Heart left ventricle (tissue), 16 donors: ENCODE measurements at regions of chr3 and their contacts with region 1.

Region 1: DNA sequence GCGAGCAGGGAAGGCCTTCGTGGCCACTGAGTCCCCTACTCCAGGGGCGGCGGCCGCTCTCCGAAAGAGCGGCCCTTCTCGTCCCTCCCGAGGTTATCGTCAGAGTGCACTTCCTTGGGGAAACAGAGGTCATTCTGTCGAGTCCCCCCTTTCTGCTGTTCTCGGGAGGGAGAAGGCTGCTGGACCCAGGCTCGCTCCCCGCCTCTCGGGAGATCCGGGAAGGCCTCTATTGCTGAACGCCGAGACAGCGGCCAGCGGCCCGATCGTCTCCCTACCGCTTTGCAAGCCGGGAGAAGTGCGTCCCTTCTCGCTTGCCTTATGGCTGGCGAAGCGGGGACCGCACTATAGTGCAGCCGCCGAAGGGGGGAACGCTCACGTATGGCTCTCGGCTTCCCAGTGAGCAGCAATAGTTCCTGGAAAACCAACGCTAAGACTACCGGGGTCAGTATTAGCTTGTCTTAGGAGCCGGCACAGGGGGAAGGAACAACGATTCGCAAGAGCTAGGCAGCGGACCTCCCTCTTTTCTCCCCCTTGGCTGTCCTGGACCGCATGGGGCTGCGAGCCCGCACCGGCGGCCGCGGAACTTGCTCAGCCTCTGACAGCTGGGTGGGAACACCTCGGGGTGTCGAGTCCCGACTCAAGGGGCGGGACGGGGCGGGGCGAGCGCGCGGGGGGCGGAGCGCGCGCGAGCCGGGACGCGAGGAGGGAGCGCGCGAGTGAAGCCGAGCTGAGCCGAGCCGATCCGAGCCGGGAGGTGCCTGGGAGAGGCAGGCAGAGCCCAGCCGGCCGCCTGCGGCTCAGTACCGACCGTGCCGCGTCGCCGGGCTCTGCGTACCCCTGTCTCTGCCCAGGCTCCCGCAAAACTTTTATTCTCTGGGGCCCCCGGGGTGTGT is 930 bp upstream of the PPM1L start:
- DNase-seq: peak; percentile 94 to 97 (median 95)
- ATAC-seq: peak; percentile 93 to 96 (median 94)
- H3K4me3 ChIP-seq: peak overlapping the region; percentile 66 to 93 (median 82)
- H3K27ac ChIP-seq: peak overlapping the region; percentile 87 to 99 (median 96)
- H3K4me1 ChIP-seq: peaks cover 0 to 38% (median 13%) of the 10 kb centered on the region in 12 donors
- H3K27me3 ChIP-seq: no peaks in the 10 kb centered on the region
- CTCF ChIP-seq: no peak
- POLR2A ChIP-seq: peak; percentile 49 to 92

Region 2: DNA sequence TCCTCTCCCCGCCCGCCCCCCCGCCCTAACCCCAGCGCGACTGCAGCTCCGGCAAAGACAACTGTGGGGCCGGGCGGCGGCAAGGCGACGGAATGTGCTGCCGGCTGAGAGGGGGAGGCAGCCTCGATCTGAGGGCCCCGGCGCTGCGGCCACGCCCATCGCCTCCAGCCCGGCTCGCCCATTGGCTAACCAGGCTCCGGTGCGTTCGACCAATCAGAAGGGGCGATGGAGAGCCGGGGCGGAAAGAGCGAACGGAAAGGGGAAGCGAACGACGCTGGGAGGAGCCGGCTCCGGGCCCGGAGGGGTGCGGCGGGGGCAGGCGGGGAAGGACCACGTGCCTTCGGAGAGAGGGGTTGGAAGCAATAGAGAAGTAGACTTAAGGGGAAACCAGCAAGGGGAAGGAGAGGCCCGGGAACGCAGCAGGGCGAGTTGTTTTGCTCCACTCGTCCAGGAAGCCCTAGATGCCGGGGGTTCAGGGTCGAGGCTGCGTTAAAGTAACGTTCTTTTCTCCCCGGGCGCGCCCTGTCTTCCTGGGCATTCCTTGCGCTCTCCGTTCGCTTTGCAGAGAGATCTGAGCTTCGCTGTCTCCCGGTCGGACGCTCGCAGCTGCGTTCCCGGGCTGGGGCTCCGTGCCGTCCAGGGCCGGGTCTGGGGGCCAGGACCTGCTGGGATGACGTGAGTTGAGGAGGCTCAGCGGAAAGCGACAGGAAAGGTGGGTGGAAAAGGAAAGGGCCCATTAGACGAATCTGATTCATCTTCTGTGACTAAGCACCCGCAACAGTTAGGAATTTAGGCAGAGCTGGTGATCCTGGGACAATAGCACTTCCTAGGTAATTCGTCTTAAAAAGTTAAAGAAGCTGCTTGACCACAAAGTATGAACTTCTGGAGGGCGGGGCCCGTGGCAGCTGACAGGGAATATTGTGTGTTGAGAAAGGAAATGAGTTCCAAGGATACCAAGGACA is 189.4 kb before region 1 on chr3 and contains the start of gene KPNA4:
- intact Hi-C with region 1: loop called in 5 of 10 experiments (anchors 5 to 10 kb)
- DNase-seq: peak; percentile 98 to 99 (median 98)
- ATAC-seq: peak; percentile 97 to 98 (median 98)
- H3K4me3 ChIP-seq: peak within 1 kb of the TSS; percentile 69 to 94 (median 85)
- H3K27ac ChIP-seq: peak within 1 kb of the TSS; percentile 93 to 99 (median 98)
- H3K4me1 ChIP-seq: peaks cover 6 to 51% (median 42%) of the 10 kb centered on the region in 12 donors
- H3K27me3 ChIP-seq: no peaks in the 10 kb centered on the region
- CTCF ChIP-seq: no peak
- POLR2A ChIP-seq: peak in 1 of 2 donors; percentile 76
- total RNA-seq, gene KPNA4: 51.2 to 198 (median 133) TPM

Region 3: GRCh38 chr3:160739079-160739478 is 16.0 kb before region 1 on chr3:
- intact Hi-C with region 1: loop called in 1 of 10 experiments (anchors 2 kb)
- DNase-seq: peak in 4 of 5 donors; percentile 39 to 66 (median 57)
- ATAC-seq: peak; percentile 93 to 96 (median 96)
- H3K4me3 ChIP-seq: no peak overlapping the region
- H3K27ac ChIP-seq: peak overlapping the region in 7 of 12 donors; percentile 36 to 63 (median 42)
- H3K4me1 ChIP-seq: peaks cover 0 to 23% (median 4%) of the 10 kb centered on the region in 12 donors
- H3K27me3 ChIP-seq: no peaks in the 10 kb centered on the region
- CTCF ChIP-seq: no peak
- POLR2A ChIP-seq: no peak

Region 4: GRCh38 chr3:160804762-160805161 is 49.7 kb after region 1 on chr3:
- intact Hi-C with region 1: loop called in 3 of 10 experiments (anchors 5 kb)
- DNase-seq: peak; percentile 60 to 84 (median 71)
- ATAC-seq: peak; percentile 69 to 82 (median 80)
- H3K4me3 ChIP-seq: no peak overlapping the region
- H3K27ac ChIP-seq: peak overlapping the region; percentile 27 to 85 (median 70)
- H3K4me1 ChIP-seq: peaks cover 0 to 63% (median 44%) of the 10 kb centered on the region in 12 donors
- H3K27me3 ChIP-seq: no peaks in the 10 kb centered on the region
- CTCF ChIP-seq: no peak
- POLR2A ChIP-seq: no peak

Region 5: DNA sequence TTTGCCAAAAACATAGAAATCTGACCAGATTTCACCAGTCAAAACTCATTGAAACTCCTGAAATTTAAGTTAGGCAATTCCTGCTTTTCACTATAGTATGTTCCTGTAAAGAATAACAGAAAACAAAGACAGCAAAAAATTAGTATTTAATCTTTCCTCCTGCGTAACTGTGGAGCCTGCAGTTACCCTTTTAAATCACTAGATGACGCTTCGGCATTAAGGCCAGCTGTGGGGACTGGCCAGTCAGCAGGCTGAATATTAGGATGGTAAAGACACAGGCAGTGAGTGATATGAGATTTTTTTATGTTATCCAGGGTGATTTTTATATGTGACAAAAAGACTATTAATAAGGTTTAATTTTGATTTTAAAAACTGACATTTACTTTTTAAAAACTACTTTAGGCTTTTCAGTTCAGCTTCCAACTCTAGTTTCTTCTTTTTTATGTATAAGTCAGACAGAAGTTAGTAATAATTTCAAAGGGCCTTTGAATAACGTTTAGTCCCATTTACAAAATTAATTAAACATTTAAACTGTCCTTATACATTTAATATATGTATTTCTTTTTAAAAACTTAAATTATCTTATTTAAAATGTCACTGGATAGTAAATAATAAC is 166.0 kb after region 1 on chr3:
- intact Hi-C with region 1: loop called in 7 of 10 experiments (anchors 5 kb)
- DNase-seq: peak in 3 of 5 donors; percentile 26 to 38 (median 27)
- ATAC-seq: peak in 3 of 4 donors; percentile 67 to 83 (median 79)
- H3K4me3 ChIP-seq: no peak overlapping the region
- H3K27ac ChIP-seq: no peak overlapping the region
- H3K4me1 ChIP-seq: peaks cover 0 to 39% (median 5%) of the 10 kb centered on the region in 12 donors
- H3K27me3 ChIP-seq: no peaks in the 10 kb centered on the region
- CTCF ChIP-seq: peak; percentile 67 to 92 (median 86)
- POLR2A ChIP-seq: no peak

Region 6: GRCh38 chr3:160941885-160942494 is 186.9 kb after region 1 on chr3:
- intact Hi-C with region 1: loop called in 2 of 10 experiments (anchors 2 to 5 kb)
- DNase-seq: peak in 3 of 5 donors; percentile 60 to 67 (median 61)
- ATAC-seq: peak; percentile 55 to 84 (median 75)
- H3K4me3 ChIP-seq: no peak overlapping the region
- H3K27ac ChIP-seq: no peak overlapping the region
- H3K4me1 ChIP-seq: peaks cover 0 to 8% (median 0%) of the 10 kb centered on the region in 12 donors
- H3K27me3 ChIP-seq: no peaks in the 10 kb centered on the region
- CTCF ChIP-seq: peak; percentile 80 to 97 (median 88)
- POLR2A ChIP-seq: no peak

Region 7: GRCh38 chr3:161220850-161221753 is 466.0 kb after region 1 on chr3 and contains the start of gene NMD3:
- intact Hi-C with region 1: loop called in 3 of 10 experiments (anchors 1 to 5 kb)
- DNase-seq: peak; percentile 96 to 97 (median 97)
- ATAC-seq: peak; percentile 97 to 98 (median 98)
- H3K4me3 ChIP-seq: peak within 1 kb of the TSS; percentile 66 to 96 (median 80)
- H3K27ac ChIP-seq: peak within 1 kb of the TSS; percentile 82 to 99 (median 91)
- H3K4me1 ChIP-seq: peaks cover 6 to 49% (median 35%) of the 10 kb centered on the region in 12 donors
- H3K27me3 ChIP-seq: no peaks in the 10 kb centered on the region
- CTCF ChIP-seq: peak in 1 of 12 donors; percentile 1
- POLR2A ChIP-seq: peak; percentile 79 to 92
- total RNA-seq, gene NMD3: 28.9 to 74.9 (median 57.6) TPM